ENCODE measurements at regions of chr18 and their contacts with region 1.

Region 1: DNA sequence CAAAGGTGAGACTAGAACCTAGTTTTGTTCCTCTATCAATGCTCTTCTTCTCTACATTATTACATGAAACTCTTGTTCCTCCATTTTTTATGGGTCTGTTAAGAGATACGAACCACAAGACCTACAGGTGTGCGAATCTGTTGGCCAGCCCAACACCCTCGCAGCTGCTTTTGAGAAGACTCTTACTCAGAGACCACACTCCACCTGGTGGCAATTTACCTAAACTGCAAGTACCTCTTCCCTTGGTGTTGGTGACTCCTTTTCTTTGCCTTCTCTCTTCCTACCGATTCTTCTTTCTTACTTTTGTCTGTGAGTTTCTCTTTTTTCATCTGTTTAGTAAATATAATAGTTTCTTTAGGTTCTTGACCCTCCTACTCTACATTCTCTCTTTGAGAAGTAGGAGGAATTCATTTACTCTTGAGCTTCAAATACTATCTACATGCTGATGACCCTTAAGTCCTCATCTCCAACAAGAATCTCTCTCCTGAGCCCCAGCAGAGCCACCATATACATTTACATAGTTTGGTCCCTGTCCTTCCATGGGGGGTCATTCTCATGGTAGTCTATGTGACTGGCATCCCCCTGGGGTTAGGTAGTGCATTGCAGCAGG is 81.8 kb upstream of the GAREM1 start:
- DNase-seq: peak; percentile 51
- H3K4me3 ChIP-seq: no peak overlapping the region; a peak in 1 of 4 replicates
- H3K27ac ChIP-seq: no peak overlapping the region
- H3K4me1 ChIP-seq: no peaks in the 10 kb centered on the region
- H3K27me3 ChIP-seq: no peaks in the 10 kb centered on the region
- CTCF ChIP-seq: peak; percentile 62
- EP300 ChIP-seq: no peak
- RAD21 ChIP-seq: peak; percentile 78

Region 2: DNA sequence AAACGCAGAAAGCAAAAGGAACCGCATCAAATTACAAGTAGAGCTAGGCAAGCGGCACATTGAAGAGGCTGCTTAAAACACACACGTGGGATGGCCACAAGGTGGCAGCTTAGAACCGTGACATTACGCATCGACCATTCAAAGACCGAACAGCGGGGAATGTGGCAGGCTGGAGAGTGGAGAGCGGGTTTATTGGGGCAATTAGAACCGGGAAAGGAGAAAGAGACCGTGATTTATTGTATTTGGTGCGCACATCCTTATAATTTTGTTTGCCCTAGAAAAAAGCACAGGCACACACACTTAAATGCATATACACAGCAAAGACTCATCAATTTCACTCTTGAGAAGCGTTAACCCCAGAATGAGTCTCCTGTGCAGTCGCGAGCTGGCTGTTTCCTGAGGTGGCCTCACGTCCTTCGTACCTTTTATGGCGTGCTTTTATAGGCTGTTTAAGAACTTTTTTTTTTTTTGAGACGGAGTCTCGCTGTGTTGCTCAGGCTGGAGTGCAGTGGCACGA is 394.4 kb before region 1 on chr18:
- CTCF ChIA-PET with region 1: interaction called, 182 read pairs
- POLR2A ChIA-PET with region 1: no interaction called
- DNase-seq: peak; percentile 76
- H3K4me3 ChIP-seq: peak overlapping the region in 1 of 2 experiments; percentile 45; a peak in 1 of 4 replicates
- H3K27ac ChIP-seq: no peak overlapping the region
- H3K4me1 ChIP-seq: no peaks in the 10 kb centered on the region; a peak in 1 of 4 replicates
- H3K27me3 ChIP-seq: no peaks in the 10 kb centered on the region
- CTCF ChIP-seq: peak; percentile 84
- EP300 ChIP-seq: no peak
- RAD21 ChIP-seq: peak; percentile 99

Region 3: GRCh38 chr18:32167975-32168730 is 384.4 kb before region 1 on chr18:
- CTCF ChIA-PET with region 1: interaction called, 10 read pairs
- POLR2A ChIA-PET with region 1: no interaction called
- DNase-seq: no peak
- H3K4me3 ChIP-seq: no peak overlapping the region
- H3K27ac ChIP-seq: no peak overlapping the region
- H3K4me1 ChIP-seq: no peaks in the 10 kb centered on the region
- H3K27me3 ChIP-seq: no peaks in the 10 kb centered on the region
- CTCF ChIP-seq: no peak
- EP300 ChIP-seq: no peak
- RAD21 ChIP-seq: no peak

Region 4: GRCh38 chr18:32289483-32290075 is 262.9 kb before region 1 on chr18:
- CTCF ChIA-PET with region 1: interaction called, 11 read pairs
- POLR2A ChIA-PET with region 1: no interaction called
- DNase-seq: peak; percentile 70
- H3K4me3 ChIP-seq: no peak overlapping the region
- H3K27ac ChIP-seq: no peak overlapping the region
- H3K4me1 ChIP-seq: no peaks in the 10 kb centered on the region
- H3K27me3 ChIP-seq: no peaks in the 10 kb centered on the region
- CTCF ChIP-seq: peak; percentile 88
- EP300 ChIP-seq: no peak
- RAD21 ChIP-seq: peak; percentile 81

Region 5: DNA sequence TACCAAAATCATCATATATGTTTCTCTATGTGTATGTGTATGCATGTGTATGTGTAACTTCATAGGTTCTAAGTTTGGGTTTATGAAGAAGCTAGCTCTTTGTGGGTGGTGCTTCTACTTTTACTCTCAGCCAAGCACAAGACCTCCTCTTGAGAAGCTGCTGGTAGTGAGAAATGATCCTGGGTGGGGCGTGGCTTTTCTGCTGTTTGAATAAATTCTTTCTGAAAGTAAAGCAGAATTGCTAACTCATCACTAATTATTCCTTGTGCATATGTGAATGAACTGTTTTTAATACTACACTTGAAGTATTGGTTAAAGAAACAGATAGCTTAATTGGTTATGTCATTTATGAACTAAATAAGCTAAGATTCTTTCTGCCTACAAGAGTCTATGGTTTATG is 74.2 kb before region 1 on chr18:
- CTCF ChIA-PET with region 1: interaction called, 10 read pairs
- POLR2A ChIA-PET with region 1: no interaction called
- DNase-seq: no peak
- H3K4me3 ChIP-seq: no peak overlapping the region
- H3K27ac ChIP-seq: no peak overlapping the region
- H3K4me1 ChIP-seq: peaks cover 0 to 4% of the 10 kb centered on the region in 2 experiments; a peak in 2 of 4 replicates
- H3K27me3 ChIP-seq: no peaks in the 10 kb centered on the region; the same call in 1 of the 2 replicates
- CTCF ChIP-seq: no peak
- EP300 ChIP-seq: no peak
- RAD21 ChIP-seq: no peak

Region 6: GRCh38 chr18:32566960-32567359 is 14.4 kb after region 1 on chr18:
- CTCF ChIA-PET with region 1: interaction called, 11 read pairs
- POLR2A ChIA-PET with region 1: no interaction called
- DNase-seq: no peak
- H3K4me3 ChIP-seq: no peak overlapping the region
- H3K27ac ChIP-seq: no peak overlapping the region
- H3K4me1 ChIP-seq: no peaks in the 10 kb centered on the region; a peak in 1 of 4 replicates
- H3K27me3 ChIP-seq: no peaks in the 10 kb centered on the region
- CTCF ChIP-seq: no peak
- EP300 ChIP-seq: no peak
- RAD21 ChIP-seq: no peak

Measured in SK-N-SH (cell line).